ENCODE measurements at regions of chr10 and their contacts with region 1.

Region 1: DNA sequence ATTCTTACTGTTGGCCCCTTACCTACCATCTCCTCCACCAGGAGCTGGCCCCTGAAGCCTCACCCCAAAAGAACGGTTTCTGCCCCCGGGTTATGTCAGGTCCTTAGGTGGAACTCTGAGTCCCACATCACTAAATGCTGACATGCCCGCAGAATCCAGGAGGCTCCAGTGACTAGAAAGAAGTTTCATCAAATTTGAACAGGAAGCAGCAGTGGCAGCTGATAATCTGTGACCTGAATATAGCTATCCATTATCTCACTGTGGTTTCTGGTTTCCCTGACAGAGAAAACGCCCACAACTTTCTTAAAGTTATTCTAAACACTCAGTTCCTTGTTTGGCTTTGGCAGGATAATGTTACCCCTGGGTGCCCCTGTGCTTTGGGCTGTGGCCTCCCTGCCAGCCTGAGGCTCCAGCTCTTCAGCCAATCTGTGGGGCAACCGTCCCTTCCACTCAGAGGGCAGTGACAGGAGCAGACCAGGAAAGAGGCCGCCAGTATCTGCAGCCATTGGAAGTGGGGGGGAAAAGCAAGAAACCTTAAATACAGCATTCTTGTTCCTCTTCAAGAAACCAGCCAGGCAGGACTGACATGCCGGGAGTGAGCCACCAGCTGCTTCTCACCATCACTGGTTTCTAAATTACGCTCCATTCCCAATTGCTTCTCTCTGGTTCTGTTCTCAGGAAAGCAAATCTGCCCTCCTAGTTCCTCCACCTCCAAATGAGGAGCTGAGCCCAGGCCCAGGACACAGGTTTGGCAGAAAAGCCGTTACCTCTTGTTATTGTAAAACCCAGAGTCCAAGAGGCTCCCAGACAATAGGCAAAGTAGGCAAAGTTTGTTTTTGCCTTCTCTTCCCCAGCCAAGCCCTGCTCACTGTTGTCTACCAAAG is 41.2 kb upstream of the VCL start:
- DNase-seq: peak; percentile 44
- ATAC-seq: peak; percentile 66
- H3K4me3 Mint-ChIP-seq: peak overlapping the region; percentile 35
- H3K27ac Mint-ChIP-seq: peak overlapping the region; percentile 87
- H3K4me1 Mint-ChIP-seq: peaks cover 58% of the 10 kb centered on the region
- H3K27me3 Mint-ChIP-seq: no peaks in the 10 kb centered on the region

Region 2: DNA sequence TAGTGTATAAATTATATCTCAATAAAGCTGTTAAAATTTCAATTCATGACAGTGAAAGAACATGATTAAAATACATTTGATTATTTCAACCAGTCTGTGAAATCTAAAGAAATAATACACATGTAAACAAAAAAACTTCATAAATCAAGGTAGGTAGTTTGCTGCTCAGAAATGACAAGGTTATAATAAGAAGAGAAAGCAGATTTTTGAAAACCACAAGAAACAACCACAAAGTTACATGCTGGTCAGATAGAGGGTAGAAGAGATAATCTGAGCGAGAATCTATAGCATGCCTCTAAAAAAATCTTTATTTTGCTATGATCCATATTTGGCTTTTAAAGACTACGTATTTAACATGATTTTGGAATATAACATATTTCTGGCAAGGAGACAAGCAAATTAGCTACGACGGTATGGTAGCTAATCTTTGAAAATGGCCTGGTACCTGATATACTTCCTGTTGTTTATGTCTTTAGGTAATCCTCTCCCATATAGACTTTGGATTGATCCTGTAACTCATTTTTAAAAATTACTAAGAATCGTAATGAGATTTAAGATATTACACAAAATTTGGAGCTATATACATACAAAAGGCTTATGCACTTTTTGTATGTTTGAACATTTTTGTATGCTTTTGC is 17.7 kb after region 1 on chr10:
- CTCF ChIA-PET with region 1: interaction called, 12 read pairs
- POLR2A ChIA-PET with region 1: no interaction called
- intact Hi-C with region 1: no loop called
- DNase-seq: no peak
- ATAC-seq: peak; percentile 57
- H3K4me3 Mint-ChIP-seq: no peak overlapping the region
- H3K27ac Mint-ChIP-seq: peak overlapping the region; percentile 24
- H3K4me1 Mint-ChIP-seq: peaks cover 12% of the 10 kb centered on the region
- H3K27me3 Mint-ChIP-seq: no peaks in the 10 kb centered on the region

Region 3: DNA sequence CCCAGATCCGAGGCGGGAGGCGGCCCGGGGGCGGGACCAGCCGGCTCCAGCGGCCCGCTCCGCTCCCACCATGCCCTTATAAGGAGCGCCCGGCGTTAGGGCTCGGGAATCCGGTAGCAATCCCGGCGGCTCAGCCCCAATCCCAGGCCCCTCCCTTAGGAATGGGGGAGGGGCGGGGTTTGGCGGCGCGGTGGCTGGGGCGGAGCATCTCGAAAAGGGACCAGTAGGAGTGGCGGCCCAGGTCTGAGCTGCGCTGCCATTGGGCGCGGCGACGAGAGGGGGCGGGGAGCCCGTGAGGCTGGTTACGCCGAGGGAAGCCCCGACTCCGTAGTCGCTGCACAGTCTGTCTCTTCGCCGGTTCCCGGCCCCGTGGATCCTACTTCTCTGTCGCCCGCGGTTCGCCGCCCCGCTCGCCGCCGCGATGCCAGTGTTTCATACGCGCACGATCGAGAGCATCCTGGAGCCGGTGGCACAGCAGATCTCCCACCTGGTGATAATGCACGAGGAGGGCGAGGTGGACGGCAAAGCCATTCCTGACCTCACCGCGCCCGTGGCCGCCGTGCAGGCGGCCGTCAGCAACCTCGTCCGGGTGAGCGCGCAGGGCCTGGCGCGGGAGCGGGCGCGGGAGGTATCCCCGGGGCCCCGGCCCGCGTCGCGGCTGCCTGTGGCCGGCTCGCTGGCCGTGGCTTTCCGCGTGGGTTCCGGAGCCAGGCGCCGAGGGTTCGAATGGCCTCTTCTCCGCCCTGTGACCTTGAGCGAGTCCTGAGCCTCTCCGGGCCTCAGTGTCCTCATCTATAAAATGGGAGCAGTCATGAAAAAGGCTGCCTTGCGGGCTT is 41.3 kb after region 1 on chr10 and contains the start of gene VCL:
- CTCF ChIA-PET with region 1: interaction called, 8 read pairs
- POLR2A ChIA-PET with region 1: interaction called, 3 read pairs
- intact Hi-C with region 1: loop called (anchors 1 to 5 kb)
- DNase-seq: peak; percentile 97
- ATAC-seq: peak; percentile 98
- H3K4me3 Mint-ChIP-seq: peak within 1 kb of the TSS; percentile 89
- H3K27ac Mint-ChIP-seq: peak within 1 kb of the TSS; percentile 97
- H3K4me1 Mint-ChIP-seq: peaks cover 39% of the 10 kb centered on the region
- H3K27me3 Mint-ChIP-seq: no peaks in the 10 kb centered on the region
- total RNA-seq, gene VCL: 20.7 to 22.7 TPM

Region 4: DNA sequence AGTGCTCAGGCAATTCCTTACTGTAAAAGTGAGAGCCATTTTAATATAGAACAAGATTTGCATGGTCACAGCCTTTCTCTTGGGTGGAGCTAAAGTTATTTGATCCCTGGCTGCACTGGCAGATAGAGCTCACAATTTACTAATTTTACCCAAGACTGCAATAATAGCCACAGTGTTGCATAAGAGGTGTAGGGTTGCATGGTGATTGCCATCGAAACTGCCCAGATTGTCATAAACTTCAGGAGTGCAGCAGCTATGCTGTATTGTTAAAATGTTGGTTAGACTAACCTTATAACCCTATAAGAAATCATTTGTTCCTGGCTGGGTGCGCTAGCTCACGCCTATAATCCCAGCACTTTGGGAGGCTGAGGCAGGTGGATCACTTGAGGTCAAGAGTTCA is 91.2 kb after region 1 on chr10:
- CTCF ChIA-PET with region 1: no interaction called
- POLR2A ChIA-PET with region 1: no interaction called
- intact Hi-C with region 1: no loop called
- DNase-seq: no peak
- ATAC-seq: no peak
- H3K4me3 Mint-ChIP-seq: no peak overlapping the region
- H3K27ac Mint-ChIP-seq: no peak overlapping the region
- H3K4me1 Mint-ChIP-seq: peaks cover 3% of the 10 kb centered on the region
- H3K27me3 Mint-ChIP-seq: no peaks in the 10 kb centered on the region

Region 5: DNA sequence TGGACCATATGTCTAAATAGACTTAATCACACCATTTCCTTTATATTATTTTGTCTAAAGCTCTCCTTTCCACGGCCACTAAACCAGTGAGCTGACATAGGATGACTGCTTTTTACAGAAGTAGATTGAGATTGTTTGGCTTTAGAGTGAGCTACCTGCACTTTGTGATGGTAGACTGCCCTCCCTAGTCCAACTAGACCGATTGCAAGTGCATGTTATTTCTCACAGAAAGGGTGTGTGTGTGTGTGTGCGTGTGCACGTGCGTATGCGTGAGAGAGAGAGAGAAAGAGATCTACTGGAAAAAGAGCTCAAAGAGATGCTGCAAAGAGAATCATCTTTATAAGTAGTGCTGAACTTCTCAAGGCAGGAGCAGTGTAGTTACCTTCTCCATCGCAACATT is 101.9 kb after region 1 on chr10:
- CTCF ChIA-PET with region 1: interaction called, 5 read pairs
- POLR2A ChIA-PET with region 1: no interaction called
- intact Hi-C with region 1: loop called (anchors 5 kb)
- DNase-seq: peak; percentile 58
- ATAC-seq: peak; percentile 43
- H3K4me3 Mint-ChIP-seq: no peak overlapping the region
- H3K27ac Mint-ChIP-seq: no peak overlapping the region
- H3K4me1 Mint-ChIP-seq: peaks cover 31% of the 10 kb centered on the region
- H3K27me3 Mint-ChIP-seq: no peaks in the 10 kb centered on the region

Measured in activated CD4-positive, alpha-beta T cell treated with anti-CD3 and anti-CD28 coated beads for 36 hours (primary cell).